GM12878 (cell line): ENCODE measurements at regions of chr3 and their contacts with region 1.

Region 1: DNA sequence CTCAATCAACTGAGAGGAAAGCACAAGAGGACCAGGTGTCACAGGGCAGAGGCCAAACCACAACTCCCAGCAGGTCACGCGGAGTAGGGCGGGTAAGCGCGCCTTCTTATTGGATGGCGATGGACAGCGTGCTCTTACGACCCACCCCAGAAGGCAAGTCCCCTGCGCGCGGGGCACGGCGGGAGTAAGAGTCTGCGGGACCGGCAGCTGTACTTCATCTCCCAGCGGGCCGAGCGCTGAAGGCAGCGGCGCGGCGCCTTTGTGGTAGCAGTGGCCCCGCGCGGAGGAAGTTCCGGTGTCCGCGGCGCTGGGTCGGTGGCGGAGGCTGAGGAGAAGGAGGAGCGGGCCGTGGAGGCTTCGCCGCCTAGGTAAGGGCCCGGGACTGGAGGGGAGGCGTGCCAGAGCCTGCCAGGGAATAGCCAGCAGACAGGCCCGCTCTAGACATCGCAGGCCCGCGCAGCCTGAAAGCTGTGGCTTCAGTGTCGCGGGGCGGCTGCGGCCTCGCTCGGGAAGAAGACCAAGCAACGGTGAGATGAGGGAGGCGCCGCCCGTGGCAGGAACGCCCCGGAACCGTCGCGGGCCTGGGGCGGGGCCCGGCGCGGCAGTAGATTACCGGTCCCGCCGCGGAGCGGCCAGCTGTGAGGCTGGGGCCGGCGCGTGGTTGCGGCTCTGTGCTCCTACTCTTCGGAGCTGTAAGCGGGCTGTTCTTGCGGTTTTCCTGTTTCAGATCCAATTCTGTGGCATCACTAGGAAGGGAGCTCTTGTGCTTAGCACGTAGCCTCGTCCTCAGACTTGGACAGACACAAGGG is at the start of gene RBM6:
- DNase-seq: peak; percentile 95
- ATAC-seq: peak; percentile 98
- H3K4me3 ChIP-seq: peak within 1 kb of the TSS; percentile 97
- H3K27ac ChIP-seq: peak within 1 kb of the TSS; percentile 93
- H3K4me1 ChIP-seq: no peaks in the 10 kb centered on the region
- H3K27me3 ChIP-seq: no peaks in the 10 kb centered on the region
- CTCF ChIP-seq: no peak
- EP300 ChIP-seq: no peak; a peak in 1 of 4 replicates
- POLR2A ChIP-seq: peak; percentile 95
- RAD21 ChIP-seq: no peak
- polyA plus RNA-seq, gene RBM6: 45.3 to 84.4 TPM

Region 2: DNA sequence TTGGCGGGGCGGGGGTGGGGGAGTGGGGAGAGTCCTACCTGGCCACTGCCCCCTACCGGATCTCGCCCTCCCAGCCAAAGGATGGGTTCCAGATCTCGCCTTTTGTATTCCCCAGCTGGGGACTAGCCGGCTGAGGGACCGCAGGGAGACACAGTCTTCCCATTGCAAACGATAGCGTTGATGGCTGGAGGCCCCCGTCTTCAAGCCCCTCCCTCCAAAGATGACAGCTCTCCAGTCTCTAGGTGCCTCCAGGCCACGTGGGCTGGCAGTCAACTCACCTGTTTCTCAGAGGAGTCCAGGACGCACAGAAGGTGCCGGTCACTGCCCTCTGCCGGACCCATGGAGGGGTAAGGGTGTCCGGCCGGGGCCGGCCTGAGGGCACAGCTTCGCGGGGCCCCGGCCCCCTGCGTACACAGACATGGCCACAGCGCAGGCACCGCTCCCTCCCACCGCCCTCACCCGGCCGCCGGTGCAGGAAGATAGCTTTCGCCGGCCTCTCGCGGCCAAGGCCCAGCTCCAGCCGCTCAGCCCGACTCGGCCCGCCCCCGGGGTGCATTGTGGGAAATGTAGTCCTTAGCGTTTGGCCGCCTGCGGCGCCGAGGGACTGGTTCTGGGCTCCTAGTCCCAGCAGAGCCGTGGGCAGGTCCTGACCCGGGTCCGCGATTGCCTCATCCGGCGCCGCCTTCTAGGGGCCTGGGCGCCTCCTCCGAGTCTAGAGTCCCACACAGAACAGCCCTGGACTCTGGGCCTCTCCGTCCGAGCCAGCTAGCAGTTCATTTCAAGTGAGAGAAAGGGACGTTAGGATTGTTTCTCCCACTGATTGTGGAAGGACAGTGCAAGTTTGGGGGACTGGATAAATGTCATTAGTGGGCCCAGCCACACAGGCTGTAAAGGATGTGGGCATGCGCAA is 10.5 kb before region 1 on chr3 and contains the start of gene MON1A:
- CTCF ChIA-PET with region 1: interaction called, 5 read pairs
- POLR2A ChIA-PET with region 1: interaction called, 38 read pairs
- RAD21 ChIA-PET with region 1: interaction called, 7 read pairs
- SMC1A ChIA-PET with region 1: interaction called, 7 read pairs
- in situ Hi-C with region 1: no loop called
- intact Hi-C with region 1: no loop called
- DNase-seq: peak; percentile 40
- ATAC-seq: peak; percentile 97
- H3K4me3 ChIP-seq: peak within 1 kb of the TSS; percentile 76
- H3K27ac ChIP-seq: peak within 1 kb of the TSS; percentile 75
- H3K4me1 ChIP-seq: no peaks in the 10 kb centered on the region; the same call in 1 of the 2 replicates
- H3K27me3 ChIP-seq: no peaks in the 10 kb centered on the region
- CTCF ChIP-seq: peak; percentile 8 to 24 (median 16); a peak in 2 of 6 replicates
- EP300 ChIP-seq: no peak
- POLR2A ChIP-seq: peak; percentile 84
- RAD21 ChIP-seq: no peak
- polyA plus RNA-seq, gene MON1A: 1.3 to 2.4 TPM

Region 3: GRCh38 chr3:50146316-50146901 is 206.3 kb after region 1 on chr3:
- CTCF ChIA-PET with region 1: no interaction called
- POLR2A ChIA-PET with region 1: no interaction called
- RAD21 ChIA-PET with region 1: no interaction called
- SMC1A ChIA-PET with region 1: no interaction called
- in situ Hi-C with region 1: no loop called
- intact Hi-C with region 1: no loop called
- DNase-seq: no peak
- ATAC-seq: peak; percentile 45; the same call in 1 of the 3 replicates
- H3K4me3 ChIP-seq: no peak overlapping the region
- H3K27ac ChIP-seq: no peak overlapping the region
- H3K4me1 ChIP-seq: no peaks in the 10 kb centered on the region
- H3K27me3 ChIP-seq: peaks cover 0 to 2% of the 10 kb centered on the region in 2 experiments; a peak in 1 of 4 replicates
- CTCF ChIP-seq: peak in 1 of 3 experiments; percentile 9; a peak in 1 of 6 replicates
- EP300 ChIP-seq: no peak
- POLR2A ChIP-seq: no peak
- RAD21 ChIP-seq: no peak